ENCODE measurements at regions of chr20 and their contacts with region 1.

Region 1: DNA sequence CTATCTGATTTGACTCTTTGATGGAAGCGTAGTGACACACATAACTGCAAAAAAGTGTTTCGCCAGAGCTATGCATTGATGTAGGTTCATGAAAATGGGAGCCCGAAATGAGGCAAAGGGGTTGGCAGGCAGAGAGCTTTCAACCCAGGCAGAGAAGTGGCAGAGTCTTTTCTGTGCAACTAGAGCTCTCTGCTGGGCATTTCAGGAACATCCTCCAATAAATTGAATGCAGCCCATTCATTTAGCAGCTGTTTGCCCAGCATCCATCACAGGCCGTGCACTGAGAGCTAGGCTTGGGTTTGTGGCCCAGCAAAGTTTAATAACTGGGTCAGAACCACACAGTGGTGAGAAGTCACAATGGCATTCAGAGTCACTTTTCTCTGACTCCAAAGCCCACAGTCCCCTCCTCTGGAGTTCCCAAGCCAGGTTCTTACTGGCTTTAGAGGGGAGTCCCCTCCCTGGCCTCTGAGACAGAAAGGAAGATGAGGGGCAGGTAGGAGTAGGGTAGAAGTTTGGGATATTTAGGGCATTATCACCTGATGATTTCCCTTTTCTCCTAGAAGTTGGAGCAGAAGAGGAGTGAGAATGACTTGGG is 31.8 kb upstream of the ELMO2 start:
- DNase-seq: no peak
- ATAC-seq: no peak
- H3K4me3 ChIP-seq: no peak overlapping the region
- H3K27ac ChIP-seq: no peak overlapping the region
- H3K4me1 ChIP-seq: no peaks in the 10 kb centered on the region
- H3K27me3 ChIP-seq: peaks cover 0 to under 1% (median 0%) of the 10 kb centered on the region in 3 donors
- CTCF ChIP-seq: no peak
- POLR2A ChIP-seq: no peak

Region 2: GRCh38 chr20:46545077-46545826 is 107.0 kb after region 1 on chr20:
- in situ Hi-C with region 1: loop called in 1 of 4 experiments (anchors 25 kb)
- intact Hi-C with region 1: no loop called
- DNase-seq: no peak
- ATAC-seq: no peak
- H3K4me3 ChIP-seq: no peak overlapping the region
- H3K27ac ChIP-seq: no peak overlapping the region
- H3K4me1 ChIP-seq: no peaks in the 10 kb centered on the region
- H3K27me3 ChIP-seq: peaks cover 0 to 7% (median 0%) of the 10 kb centered on the region in 3 donors
- CTCF ChIP-seq: no peak
- POLR2A ChIP-seq: no peak